GM12878 (cell line): ENCODE measurements at regions of chr4 and their contacts with region 1.

Region 1: GRCh38 chr4:99847362-99847976 is 30.8 kb downstream of the DAPP1 start:
- DNase-seq: peak; percentile 87
- ATAC-seq: peak; percentile 61
- H3K4me3 ChIP-seq: peak overlapping the region; percentile 48; the same call in 1 of the 2 replicates
- H3K27ac ChIP-seq: peak overlapping the region; percentile 94
- H3K4me1 ChIP-seq: peaks cover 63% of the 10 kb centered on the region
- H3K27me3 ChIP-seq: no peaks in the 10 kb centered on the region
- CTCF ChIP-seq: no peak
- EP300 ChIP-seq: peak; percentile 94 to 99
- POLR2A ChIP-seq: no peak
- RAD21 ChIP-seq: no peak

Region 2: GRCh38 chr4:99563310-99564186 is 283.9 kb before region 1 on chr4 and contains the start of gene TRMT10A:
- CTCF ChIA-PET with region 1: interaction called, 3 read pairs
- POLR2A ChIA-PET with region 1: interaction called, 5 read pairs
- RAD21 ChIA-PET with region 1: no interaction called
- SMC1A ChIA-PET with region 1: interaction called, 3 read pairs
- in situ Hi-C with region 1: no loop called
- intact Hi-C with region 1: loop called (anchors 1 kb)
- DNase-seq: peak; percentile 85
- ATAC-seq: peak; percentile 95
- H3K4me3 ChIP-seq: peak within 1 kb of the TSS; percentile 93
- H3K27ac ChIP-seq: peak within 1 kb of the TSS; percentile 97
- H3K4me1 ChIP-seq: no peaks in the 10 kb centered on the region
- H3K27me3 ChIP-seq: no peaks in the 10 kb centered on the region
- CTCF ChIP-seq: no peak
- EP300 ChIP-seq: no peak
- POLR2A ChIP-seq: peak; percentile 81
- RAD21 ChIP-seq: no peak
- polyA plus RNA-seq, gene TRMT10A: 8.8 to 9.6 TPM

Region 3: DNA sequence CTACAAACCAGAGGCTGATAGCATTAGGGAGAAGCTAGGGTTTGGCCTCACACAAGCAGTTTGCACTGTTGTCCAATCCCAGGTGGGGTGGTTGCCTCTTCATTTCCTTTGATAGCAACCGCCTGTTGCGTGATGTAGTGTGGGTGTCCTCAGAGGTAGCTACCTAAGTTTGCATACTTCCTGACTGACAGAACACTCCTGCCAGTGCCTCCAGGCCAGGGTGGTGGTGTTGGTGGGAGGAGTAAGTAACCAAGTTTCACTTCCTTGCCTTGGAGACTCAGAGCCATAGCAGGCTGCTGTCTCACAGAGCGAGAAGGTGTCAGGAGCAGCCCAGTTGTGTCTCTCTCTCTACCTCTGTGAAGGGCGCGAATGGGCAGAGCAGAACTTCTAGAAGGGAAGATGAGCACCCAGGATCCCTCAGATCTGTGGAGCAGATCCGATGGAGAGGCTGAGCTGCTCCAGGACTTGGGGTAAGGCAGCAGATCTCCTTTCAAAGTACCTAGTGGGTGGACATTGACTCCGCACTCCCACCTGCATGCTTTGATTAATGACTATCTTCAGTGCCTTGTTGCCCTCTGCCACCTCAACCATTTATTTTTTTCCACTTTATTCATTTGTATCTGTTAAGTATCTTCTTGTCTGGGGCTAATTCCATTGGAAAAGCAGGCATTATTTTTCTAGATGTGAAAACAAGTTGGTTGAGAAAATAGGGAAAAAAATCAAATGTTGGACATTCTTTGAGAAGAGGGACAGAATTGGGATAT is 30.7 kb before region 1 on chr4 and contains the start of gene DAPP1:
- CTCF ChIA-PET with region 1: interaction called, 43 read pairs
- POLR2A ChIA-PET with region 1: interaction called, 30 read pairs
- RAD21 ChIA-PET with region 1: interaction called, 45 read pairs
- SMC1A ChIA-PET with region 1: interaction called, 68 read pairs
- in situ Hi-C with region 1: no loop called
- intact Hi-C with region 1: loop called (anchors 1 kb)
- DNase-seq: peak; percentile 94
- ATAC-seq: peak; percentile 88
- H3K4me3 ChIP-seq: peak within 1 kb of the TSS; percentile 95
- H3K27ac ChIP-seq: peak within 1 kb of the TSS; percentile 85
- H3K4me1 ChIP-seq: peaks cover 19% of the 10 kb centered on the region
- H3K27me3 ChIP-seq: no peaks in the 10 kb centered on the region
- CTCF ChIP-seq: no peak
- EP300 ChIP-seq: peak; percentile 65 to 71; a peak in 3 of 4 replicates
- POLR2A ChIP-seq: peak; percentile 98
- RAD21 ChIP-seq: no peak
- polyA plus RNA-seq, gene DAPP1: 104 to 147 TPM

Region 4: DNA sequence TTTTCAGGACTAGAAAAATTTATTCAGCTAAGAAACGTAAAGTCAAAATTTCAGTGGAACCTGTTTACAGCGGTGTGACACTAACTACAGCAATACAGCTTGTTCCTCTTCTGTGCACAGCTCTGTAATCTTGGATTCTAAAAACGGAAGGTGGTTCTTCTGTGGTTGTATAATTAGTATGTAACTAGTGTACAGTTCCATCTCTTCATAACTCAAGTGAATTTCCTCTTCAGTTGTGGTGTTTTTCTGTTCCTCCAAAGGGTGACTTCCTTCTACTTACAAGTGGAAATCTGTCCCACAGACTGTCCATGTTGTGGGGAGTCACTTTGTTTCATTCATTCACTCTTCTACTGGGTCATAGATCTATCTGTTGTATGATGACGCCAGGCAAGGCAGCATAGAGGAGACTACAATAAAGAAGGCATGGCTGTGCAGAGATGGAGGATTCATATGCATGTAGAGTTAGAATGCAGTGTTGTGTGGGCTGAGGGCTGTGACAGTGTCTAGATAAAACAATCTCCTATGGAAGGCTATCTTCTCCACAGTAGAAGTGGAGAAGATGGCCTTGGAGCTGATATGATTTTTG is 25.5 kb before region 1 on chr4:
- CTCF ChIA-PET with region 1: interaction called, 43 read pairs
- POLR2A ChIA-PET with region 1: interaction called, 30 read pairs
- RAD21 ChIA-PET with region 1: interaction called, 45 read pairs
- SMC1A ChIA-PET with region 1: interaction called, 68 read pairs
- in situ Hi-C with region 1: no loop called
- intact Hi-C with region 1: loop called (anchors 1 kb)
- DNase-seq: peak; percentile 59
- ATAC-seq: peak; percentile 73
- H3K4me3 ChIP-seq: peak overlapping the region; percentile 59; the same call in 1 of the 2 replicates
- H3K27ac ChIP-seq: peak overlapping the region; percentile 70
- H3K4me1 ChIP-seq: peaks cover 17% of the 10 kb centered on the region; the same call in 1 of the 2 replicates
- H3K27me3 ChIP-seq: no peaks in the 10 kb centered on the region
- CTCF ChIP-seq: no peak
- EP300 ChIP-seq: no peak
- POLR2A ChIP-seq: no peak
- RAD21 ChIP-seq: no peak

Region 5: GRCh38 chr4:99827454-99827853 is 20.0 kb before region 1 on chr4:
- CTCF ChIA-PET with region 1: interaction called, 43 read pairs
- POLR2A ChIA-PET with region 1: interaction called, 6 read pairs
- RAD21 ChIA-PET with region 1: interaction called, 45 read pairs
- SMC1A ChIA-PET with region 1: interaction called, 68 read pairs
- in situ Hi-C with region 1: no loop called
- intact Hi-C with region 1: loop called (anchors 1 kb)
- DNase-seq: no peak
- ATAC-seq: peak; percentile 3; the same call in 1 of the 3 replicates
- H3K4me3 ChIP-seq: no peak overlapping the region
- H3K27ac ChIP-seq: no peak overlapping the region
- H3K4me1 ChIP-seq: peaks cover 9% of the 10 kb centered on the region; the same call in 1 of the 2 replicates
- H3K27me3 ChIP-seq: no peaks in the 10 kb centered on the region
- CTCF ChIP-seq: no peak
- EP300 ChIP-seq: no peak
- POLR2A ChIP-seq: no peak
- RAD21 ChIP-seq: no peak

Region 6: DNA sequence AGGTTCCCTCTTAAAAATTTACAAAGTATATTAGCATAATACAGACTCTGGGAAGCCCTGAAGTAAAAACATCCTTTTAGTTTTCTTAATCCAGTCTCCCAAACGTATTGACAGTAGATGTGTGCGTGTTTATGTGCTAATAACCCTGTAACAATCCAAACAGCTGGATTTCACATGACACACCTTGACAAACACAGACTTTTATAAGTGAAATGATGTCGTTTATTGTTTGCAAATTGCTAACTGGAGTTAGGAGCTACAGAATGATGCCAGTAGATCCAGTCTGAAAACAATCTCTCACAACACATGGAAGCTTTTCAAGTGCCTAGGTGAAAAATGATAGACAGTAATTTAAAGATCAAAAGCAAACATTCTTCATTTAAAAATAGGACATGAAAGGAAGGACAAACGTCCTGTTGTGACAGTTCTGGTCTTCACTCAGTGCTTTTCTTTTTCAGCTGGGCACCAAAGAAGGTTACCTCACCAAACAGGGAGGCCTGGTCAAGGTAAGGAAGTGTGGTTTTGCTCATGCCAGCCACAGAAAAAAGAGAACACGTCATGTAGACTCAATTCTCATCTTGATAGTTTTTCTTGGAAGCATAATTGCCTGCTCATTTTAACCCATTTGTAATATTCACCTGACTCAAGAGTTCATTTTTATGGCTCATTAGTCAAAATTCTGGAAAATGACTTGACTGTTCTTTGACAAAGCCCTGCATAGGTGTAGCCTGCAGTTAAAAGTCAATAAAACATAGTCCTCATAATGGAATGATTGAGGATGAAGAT is 13.8 kb after region 1 on chr4:
- CTCF ChIA-PET with region 1: interaction called, 4 read pairs
- POLR2A ChIA-PET with region 1: interaction called, 3 read pairs
- RAD21 ChIA-PET with region 1: interaction called, 4 read pairs
- SMC1A ChIA-PET with region 1: interaction called, 43 read pairs
- in situ Hi-C with region 1: no loop called
- intact Hi-C with region 1: no loop called
- DNase-seq: no peak
- ATAC-seq: peak; percentile 81
- H3K4me3 ChIP-seq: no peak overlapping the region
- H3K27ac ChIP-seq: peak overlapping the region; percentile 24; the same call in 1 of the 2 replicates
- H3K4me1 ChIP-seq: peaks cover 14% of the 10 kb centered on the region
- H3K27me3 ChIP-seq: no peaks in the 10 kb centered on the region
- CTCF ChIP-seq: no peak
- EP300 ChIP-seq: no peak
- POLR2A ChIP-seq: no peak
- RAD21 ChIP-seq: no peak

Region 7: DNA sequence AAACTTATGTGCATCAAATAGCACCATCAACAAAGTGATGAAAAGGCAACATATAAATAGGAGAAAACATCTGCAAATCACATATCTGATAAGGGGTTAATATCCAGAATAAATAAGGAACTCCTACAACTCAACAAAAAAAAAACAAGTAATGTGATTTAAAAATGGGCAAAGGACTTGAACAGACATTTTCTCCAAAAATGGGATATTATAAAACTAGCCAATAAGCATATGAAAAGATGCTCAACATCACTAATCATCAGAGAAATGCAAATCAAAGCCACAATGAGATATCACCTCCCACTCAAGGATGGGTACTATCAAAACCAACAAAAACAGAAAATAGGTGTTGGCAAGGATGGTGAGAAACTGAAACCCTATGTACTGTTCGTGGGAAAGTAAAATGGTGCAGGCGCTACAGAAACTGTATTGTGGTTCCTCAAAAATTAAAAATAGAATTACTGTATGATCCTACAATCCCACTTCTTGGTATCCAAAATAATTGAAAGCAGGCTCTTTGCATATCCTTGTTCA is 96.5 kb after region 1 on chr4:
- CTCF ChIA-PET with region 1: interaction called, 8 read pairs
- POLR2A ChIA-PET with region 1: interaction called, 5 read pairs
- RAD21 ChIA-PET with region 1: interaction called, 7 read pairs
- SMC1A ChIA-PET with region 1: interaction called, 16 read pairs
- in situ Hi-C with region 1: no loop called
- intact Hi-C with region 1: loop called (anchors 2 kb)
- DNase-seq: no peak
- ATAC-seq: peak; percentile 40
- H3K4me3 ChIP-seq: peak overlapping the region; percentile 90
- H3K27ac ChIP-seq: peak overlapping the region; percentile 20; the same call in 1 of the 2 replicates
- H3K4me1 ChIP-seq: peaks cover 12% of the 10 kb centered on the region; the same call in 1 of the 2 replicates
- H3K27me3 ChIP-seq: no peaks in the 10 kb centered on the region
- CTCF ChIP-seq: no peak
- EP300 ChIP-seq: no peak
- POLR2A ChIP-seq: no peak
- RAD21 ChIP-seq: no peak

Region 8: GRCh38 chr4:100049872-100050271 is 202.4 kb after region 1 on chr4:
- CTCF ChIA-PET with region 1: no interaction called
- POLR2A ChIA-PET with region 1: no interaction called
- RAD21 ChIA-PET with region 1: no interaction called
- SMC1A ChIA-PET with region 1: no interaction called
- in situ Hi-C with region 1: no loop called
- intact Hi-C with region 1: no loop called
- DNase-seq: no peak
- ATAC-seq: no peak
- H3K4me3 ChIP-seq: no peak overlapping the region
- H3K27ac ChIP-seq: no peak overlapping the region
- H3K4me1 ChIP-seq: no peaks in the 10 kb centered on the region
- H3K27me3 ChIP-seq: no peaks in the 10 kb centered on the region
- CTCF ChIP-seq: no peak
- EP300 ChIP-seq: no peak
- POLR2A ChIP-seq: no peak
- RAD21 ChIP-seq: no peak